Ovary (tissue), 10 donors: ENCODE measurements at regions of chr14 and their contacts with region 1.

Region 1: GRCh38 chr14:75654127-75654732 is 6.4 kb downstream of the ERG28 start:
- DNase-seq: peak; percentile 69 to 86 (median 82)
- H3K4me3 ChIP-seq: no peak overlapping the region
- H3K27ac ChIP-seq: no peak overlapping the region
- H3K4me1 ChIP-seq: no peaks in the 10 kb centered on the region
- H3K27me3 ChIP-seq: no peaks in the 10 kb centered on the region
- CTCF ChIP-seq: peak; percentile 83 to 87 (median 84)
- EP300 ChIP-seq: no peak
- POLR2A ChIP-seq: no peak

Region 2: GRCh38 chr14:75577729-75578101 is 76.5 kb before region 1 on chr14:
- intact Hi-C with region 1: loop called (anchors 2 to 5 kb)
- DNase-seq: peak; percentile 82 to 90 (median 85)
- H3K4me3 ChIP-seq: peak overlapping the region; percentile 65
- H3K27ac ChIP-seq: peak overlapping the region in 1 of 2 donors; percentile 57
- H3K4me1 ChIP-seq: peaks cover 14% of the 10 kb centered on the region
- H3K27me3 ChIP-seq: no peaks in the 10 kb centered on the region
- CTCF ChIP-seq: peak; percentile 59 to 73 (median 65)
- EP300 ChIP-seq: no peak
- POLR2A ChIP-seq: no peak